Activated T-helper 2 cell treated with anti-CD3 and anti-CD28 coated beads, Interferon-gamma antibody, Interleukin-2, Interleukin-4, amounts not matched to agents 10 μg/mL and 5 μg/mL and 100 μg/mL, durations not matched to agents 14 hours and 24 hours and 36 hours (primary cell): ENCODE measurements at regions of chr9 and their contacts with region 1.

Region 1: DNA sequence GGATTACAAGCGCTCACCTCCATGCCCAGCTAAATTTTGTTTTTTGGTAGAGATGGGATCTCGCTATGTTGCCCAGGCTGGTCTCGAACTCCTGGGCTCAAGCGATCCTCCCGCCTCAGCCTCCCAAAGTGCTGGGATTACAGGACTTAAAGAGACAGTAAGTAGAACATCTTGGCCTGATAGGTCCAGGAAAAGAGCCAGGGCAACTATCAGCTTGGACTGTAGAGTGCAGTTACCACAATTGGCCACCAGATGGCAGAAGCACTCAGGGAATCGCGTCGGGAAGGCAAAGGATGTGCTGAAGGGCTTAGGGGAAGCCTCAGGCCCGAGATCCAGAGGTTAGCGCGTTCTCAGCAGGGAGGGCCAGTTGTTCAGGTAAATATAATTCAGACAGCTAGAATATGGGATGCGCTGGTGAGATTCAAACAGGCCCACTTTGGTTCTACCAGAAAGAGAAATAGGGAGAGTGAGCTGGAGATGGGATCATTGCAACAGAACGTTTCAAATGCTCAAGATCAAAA is 21.5 kb downstream of the C9orf57 start:
- DNase-seq: peak; percentile 40
- H3K4me3 Mint-ChIP-seq: no peak overlapping the region
- H3K27ac Mint-ChIP-seq: no peak overlapping the region
- H3K4me1 Mint-ChIP-seq: peaks cover 4% of the 10 kb centered on the region
- H3K27me3 Mint-ChIP-seq: peaks cover 15% of the 10 kb centered on the region

Region 2: DNA sequence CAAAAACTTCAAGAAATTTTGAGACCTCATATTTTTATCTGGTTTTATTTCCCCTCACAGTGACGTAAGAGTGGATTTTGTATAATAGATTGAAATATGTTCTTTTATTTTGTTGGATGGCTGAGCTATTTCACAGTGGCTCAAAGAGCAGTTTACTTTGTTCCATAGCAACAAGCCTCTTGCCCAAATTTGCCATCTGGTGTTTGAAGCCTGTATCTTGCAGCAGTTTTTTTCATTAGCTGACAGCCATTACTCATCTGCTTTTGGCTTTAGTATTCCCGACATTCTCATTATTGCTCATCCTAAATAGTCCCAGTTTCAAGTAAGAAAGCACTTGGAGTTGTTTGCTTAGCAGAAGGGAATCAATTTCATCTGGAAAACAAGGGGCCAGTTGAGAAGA is 146.6 kb after region 1 on chr9:
- intact Hi-C with region 1: loop called (anchors 10 kb)
- DNase-seq: no peak
- H3K4me3 Mint-ChIP-seq: no peak overlapping the region
- H3K27ac Mint-ChIP-seq: no peak overlapping the region
- H3K4me1 Mint-ChIP-seq: no peaks in the 10 kb centered on the region
- H3K27me3 Mint-ChIP-seq: no peaks in the 10 kb centered on the region

Region 3: DNA sequence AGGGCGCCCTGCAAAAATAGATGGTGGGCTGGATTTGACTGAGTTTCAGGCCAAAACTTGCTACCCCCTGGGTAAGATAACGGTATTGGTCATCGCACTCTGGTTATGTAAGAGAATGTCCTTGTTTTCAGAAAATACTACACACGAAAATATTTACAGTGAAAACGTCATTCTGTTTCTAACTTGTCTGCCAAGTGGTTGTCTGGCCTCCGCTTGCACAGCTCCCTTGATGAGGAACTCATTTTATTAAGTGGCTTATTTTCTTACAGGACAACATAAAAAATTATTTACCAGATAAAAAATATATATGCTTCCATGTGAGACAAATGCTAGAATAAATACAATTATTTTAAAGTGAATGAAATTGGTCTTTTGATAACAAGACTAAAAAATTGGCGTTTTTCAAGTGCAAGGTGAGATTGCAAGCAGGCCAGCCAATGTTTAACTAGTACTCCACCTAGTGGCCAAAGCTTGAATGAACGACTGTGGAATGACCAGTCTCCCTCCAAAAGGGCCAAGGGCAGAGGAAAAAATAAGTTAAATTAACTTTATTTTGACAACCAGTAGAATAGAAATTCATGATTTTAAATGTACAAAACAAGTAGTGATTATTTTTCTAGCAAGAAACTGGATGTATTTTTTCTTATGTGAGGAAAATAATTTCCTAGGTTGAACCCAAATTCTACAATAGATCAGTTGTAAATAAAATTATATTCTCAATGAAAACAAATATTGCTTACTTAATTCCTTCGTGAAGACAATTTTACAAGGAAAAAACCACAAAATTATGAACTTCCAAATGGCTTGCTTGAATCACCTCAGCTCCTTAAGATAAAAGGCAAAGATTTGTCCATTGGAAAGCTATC is 232.9 kb after region 1 on chr9:
- intact Hi-C with region 1: loop called (anchors 1 kb)
- DNase-seq: no peak
- H3K4me3 Mint-ChIP-seq: no peak overlapping the region
- H3K27ac Mint-ChIP-seq: no peak overlapping the region
- H3K4me1 Mint-ChIP-seq: no peaks in the 10 kb centered on the region
- H3K27me3 Mint-ChIP-seq: peaks cover 1% of the 10 kb centered on the region